CD4-positive, alpha-beta T cell (primary cell): ENCODE measurements at regions of chr5 and their contacts with region 1.

Region 1: GRCh38 chr5:59039296-59040023 is 456.6 kb downstream of the RAB3C start:
- DNase-seq: peak; percentile 86 to 96 (median 90)
- ATAC-seq: peak; percentile 79
- H3K4me3 ChIP-seq: peak overlapping the region; percentile 82
- H3K4me3 Mint-ChIP-seq: peak overlapping the region; percentile 86
- H3K27ac ChIP-seq: peak overlapping the region; percentile 60 to 89
- H3K27ac Mint-ChIP-seq: peak overlapping the region; percentile 96
- H3K4me1 ChIP-seq: peaks cover 21% of the 10 kb centered on the region
- H3K4me1 Mint-ChIP-seq: peaks cover 69% of the 10 kb centered on the region
- H3K27me3 ChIP-seq: no peaks in the 10 kb centered on the region
- H3K27me3 Mint-ChIP-seq: no peaks in the 10 kb centered on the region
- CTCF ChIP-seq: no peak

Region 2: DNA sequence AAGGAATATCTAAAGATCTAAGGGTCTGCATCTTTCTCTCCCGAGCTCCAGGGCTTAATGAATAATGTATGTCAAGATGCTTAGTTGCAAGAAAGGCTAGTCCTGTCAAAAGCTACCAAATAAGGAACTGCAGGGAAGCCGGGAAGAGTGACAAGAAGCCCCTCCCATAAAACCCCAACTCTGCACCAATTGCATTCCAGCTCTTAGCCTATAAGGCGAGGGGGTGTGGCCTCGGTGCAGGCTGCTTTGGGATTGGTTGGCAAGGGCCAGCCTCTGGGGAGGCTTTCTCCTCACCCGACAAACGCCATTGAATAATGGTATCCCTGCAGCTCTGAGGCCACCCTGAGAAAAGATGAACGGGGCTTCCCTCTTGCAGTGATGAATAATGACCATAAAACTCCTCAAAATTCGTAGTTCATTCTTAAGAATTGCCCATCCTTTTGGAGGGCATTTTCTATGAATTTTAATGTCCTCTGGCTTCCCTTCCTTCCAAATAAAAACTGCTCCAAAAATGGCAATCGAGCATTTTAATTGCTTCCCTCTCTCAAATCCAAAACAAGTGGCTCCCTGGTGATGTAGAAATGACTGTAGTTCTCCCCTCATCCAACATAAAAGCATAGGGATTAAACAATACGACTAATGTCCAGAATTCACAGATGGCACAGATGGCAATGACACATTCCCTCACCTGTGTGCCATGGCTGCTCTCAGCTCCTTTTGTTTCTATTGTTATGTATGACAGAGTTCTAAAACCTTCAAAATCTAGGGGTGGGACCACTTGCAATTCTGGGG is 39.5 kb before region 1 on chr5:
- CTCF ChIA-PET with region 1: interaction called, 3 read pairs
- POLR2A ChIA-PET with region 1: interaction called, 3 read pairs
- intact Hi-C with region 1: loop called in 1 of 2 experiments (anchors 5 kb)
- DNase-seq: no peak
- ATAC-seq: peak; percentile 43
- H3K4me3 ChIP-seq: no peak overlapping the region
- H3K4me3 Mint-ChIP-seq: no peak overlapping the region
- H3K27ac ChIP-seq: no peak overlapping the region
- H3K27ac Mint-ChIP-seq: no peak overlapping the region
- H3K4me1 ChIP-seq: peaks cover 3% of the 10 kb centered on the region
- H3K4me1 Mint-ChIP-seq: peaks cover 70% of the 10 kb centered on the region
- H3K27me3 ChIP-seq: no peaks in the 10 kb centered on the region
- H3K27me3 Mint-ChIP-seq: no peaks in the 10 kb centered on the region
- CTCF ChIP-seq: no peak

Region 3: GRCh38 chr5:59126708-59127573 is 87.5 kb after region 1 on chr5:
- CTCF ChIA-PET with region 1: interaction called, 25 read pairs
- POLR2A ChIA-PET with region 1: interaction called, 155 read pairs
- intact Hi-C with region 1: loop called (anchors 1 kb)
- DNase-seq: peak in 3 of 14 experiments; percentile 5 to 81 (median 75)
- ATAC-seq: peak; percentile 5
- H3K4me3 ChIP-seq: peak overlapping the region; percentile 51
- H3K4me3 Mint-ChIP-seq: no peak overlapping the region
- H3K27ac ChIP-seq: peak overlapping the region; percentile 56 to 68
- H3K27ac Mint-ChIP-seq: no peak overlapping the region
- H3K4me1 ChIP-seq: peaks cover 36% of the 10 kb centered on the region
- H3K4me1 Mint-ChIP-seq: peaks cover 13% of the 10 kb centered on the region
- H3K27me3 ChIP-seq: no peaks in the 10 kb centered on the region
- H3K27me3 Mint-ChIP-seq: no peaks in the 10 kb centered on the region
- CTCF ChIP-seq: no peak

Region 4: DNA sequence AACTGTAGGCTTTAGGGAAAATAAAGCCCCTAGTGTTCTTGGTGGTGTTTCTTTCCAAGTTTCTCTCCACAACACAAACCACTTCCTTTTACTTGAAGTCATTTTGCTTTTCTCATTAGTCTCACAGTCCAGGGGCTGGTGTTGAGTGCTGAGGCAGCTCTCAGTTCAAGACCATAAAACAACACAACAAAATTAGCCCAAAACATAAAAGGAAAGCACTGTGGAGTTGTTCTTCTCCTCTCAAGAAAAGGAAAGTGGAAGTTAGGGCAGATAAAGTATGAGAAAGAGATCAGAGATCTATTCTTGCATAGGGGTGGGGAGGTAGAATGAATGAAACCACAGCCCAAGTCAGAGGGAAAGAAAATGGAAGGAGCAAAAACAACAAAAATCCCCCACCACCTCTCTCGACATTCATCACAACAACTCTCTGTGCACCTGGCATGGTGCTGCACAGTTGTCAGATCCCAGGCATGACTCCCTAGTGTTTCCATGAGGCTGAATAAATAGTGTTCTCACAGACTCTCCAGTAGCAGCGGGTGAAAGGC is 113.3 kb after region 1 on chr5:
- CTCF ChIA-PET with region 1: no interaction called
- POLR2A ChIA-PET with region 1: interaction called, 12 read pairs
- intact Hi-C with region 1: no loop called
- DNase-seq: peak in 3 of 14 experiments; percentile 27 to 42 (median 32)
- ATAC-seq: no peak
- H3K4me3 ChIP-seq: no peak overlapping the region
- H3K4me3 Mint-ChIP-seq: peak overlapping the region; percentile 2
- H3K27ac ChIP-seq: no peak overlapping the region
- H3K27ac Mint-ChIP-seq: no peak overlapping the region
- H3K4me1 ChIP-seq: peaks cover 8% of the 10 kb centered on the region
- H3K4me1 Mint-ChIP-seq: no peaks in the 10 kb centered on the region
- H3K27me3 ChIP-seq: no peaks in the 10 kb centered on the region
- H3K27me3 Mint-ChIP-seq: no peaks in the 10 kb centered on the region
- CTCF ChIP-seq: no peak

Region 5: GRCh38 chr5:59174248-59174844 is 134.9 kb after region 1 on chr5:
- CTCF ChIA-PET with region 1: interaction called, 29 read pairs
- POLR2A ChIA-PET with region 1: interaction called, 36 read pairs
- intact Hi-C with region 1: loop called (anchors 1 kb)
- DNase-seq: peak in 9 of 14 experiments; percentile 7 to 80 (median 26)
- ATAC-seq: peak; percentile 80
- H3K4me3 ChIP-seq: no peak overlapping the region
- H3K4me3 Mint-ChIP-seq: no peak overlapping the region
- H3K27ac ChIP-seq: no peak overlapping the region
- H3K27ac Mint-ChIP-seq: no peak overlapping the region
- H3K4me1 ChIP-seq: no peaks in the 10 kb centered on the region
- H3K4me1 Mint-ChIP-seq: peaks cover 5% of the 10 kb centered on the region
- H3K27me3 ChIP-seq: no peaks in the 10 kb centered on the region
- H3K27me3 Mint-ChIP-seq: no peaks in the 10 kb centered on the region
- CTCF ChIP-seq: peak; percentile 91